ENCODE measurements at regions of chr22 and their contacts with region 1.

Region 1: DNA sequence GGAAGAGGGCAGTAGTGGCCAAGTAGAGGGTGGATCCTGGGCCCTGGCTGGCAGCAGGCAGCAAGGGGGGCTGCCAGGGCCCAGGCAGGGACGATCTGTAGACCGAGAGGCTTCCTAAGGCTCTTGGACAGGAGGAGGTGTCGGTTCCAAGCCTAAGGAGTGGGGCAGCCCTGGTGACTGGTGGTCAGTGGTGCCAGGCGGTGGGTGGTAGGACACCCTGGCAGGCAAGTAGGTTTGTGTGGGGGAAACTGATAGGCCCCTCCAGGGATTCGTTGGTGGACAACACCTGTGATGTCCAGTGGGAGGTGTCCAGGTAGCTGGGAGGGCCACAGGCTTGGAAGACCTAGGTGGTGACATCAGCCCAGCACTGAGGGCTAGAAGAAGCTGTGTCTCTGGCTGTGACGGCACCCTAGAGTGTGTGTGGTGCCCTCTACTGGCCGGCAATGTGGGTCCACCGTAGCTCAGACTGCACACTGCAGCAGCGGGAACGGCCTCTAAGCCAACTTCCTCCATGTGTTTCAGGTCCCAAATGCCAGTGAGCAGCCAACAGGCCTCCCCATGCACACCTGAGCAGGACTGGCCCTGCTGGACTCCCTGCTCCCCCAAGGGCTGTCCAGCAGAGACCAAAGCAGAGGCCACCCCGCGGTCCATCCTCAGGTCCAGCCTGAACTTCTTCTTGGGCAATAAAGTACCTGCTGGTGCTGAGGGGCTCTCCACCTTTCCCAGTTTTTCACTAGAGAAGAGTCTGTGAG is 9.4 kb upstream of the SAMM50 start:
- DNase-seq: peak; percentile 87
- ATAC-seq: peak; percentile 100
- H3K4me3 Mint-ChIP-seq: no peak overlapping the region
- H3K27ac Mint-ChIP-seq: no peak overlapping the region
- H3K4me1 Mint-ChIP-seq: no peaks in the 10 kb centered on the region
- H3K27me3 Mint-ChIP-seq: peaks cover 9% of the 10 kb centered on the region

Region 2: GRCh38 chr22:43884600-43885325 is 61.0 kb before region 1 on chr22:
- CTCF ChIA-PET with region 1: interaction called, 16 read pairs
- POLR2A ChIA-PET with region 1: no interaction called
- intact Hi-C with region 1: loop called in 1 of 2 experiments (anchors 1 kb)
- DNase-seq: peak; percentile 77
- ATAC-seq: peak; percentile 31
- H3K4me3 Mint-ChIP-seq: no peak overlapping the region
- H3K27ac Mint-ChIP-seq: no peak overlapping the region
- H3K4me1 Mint-ChIP-seq: no peaks in the 10 kb centered on the region
- H3K27me3 Mint-ChIP-seq: peaks cover 15% of the 10 kb centered on the region

Region 3: DNA sequence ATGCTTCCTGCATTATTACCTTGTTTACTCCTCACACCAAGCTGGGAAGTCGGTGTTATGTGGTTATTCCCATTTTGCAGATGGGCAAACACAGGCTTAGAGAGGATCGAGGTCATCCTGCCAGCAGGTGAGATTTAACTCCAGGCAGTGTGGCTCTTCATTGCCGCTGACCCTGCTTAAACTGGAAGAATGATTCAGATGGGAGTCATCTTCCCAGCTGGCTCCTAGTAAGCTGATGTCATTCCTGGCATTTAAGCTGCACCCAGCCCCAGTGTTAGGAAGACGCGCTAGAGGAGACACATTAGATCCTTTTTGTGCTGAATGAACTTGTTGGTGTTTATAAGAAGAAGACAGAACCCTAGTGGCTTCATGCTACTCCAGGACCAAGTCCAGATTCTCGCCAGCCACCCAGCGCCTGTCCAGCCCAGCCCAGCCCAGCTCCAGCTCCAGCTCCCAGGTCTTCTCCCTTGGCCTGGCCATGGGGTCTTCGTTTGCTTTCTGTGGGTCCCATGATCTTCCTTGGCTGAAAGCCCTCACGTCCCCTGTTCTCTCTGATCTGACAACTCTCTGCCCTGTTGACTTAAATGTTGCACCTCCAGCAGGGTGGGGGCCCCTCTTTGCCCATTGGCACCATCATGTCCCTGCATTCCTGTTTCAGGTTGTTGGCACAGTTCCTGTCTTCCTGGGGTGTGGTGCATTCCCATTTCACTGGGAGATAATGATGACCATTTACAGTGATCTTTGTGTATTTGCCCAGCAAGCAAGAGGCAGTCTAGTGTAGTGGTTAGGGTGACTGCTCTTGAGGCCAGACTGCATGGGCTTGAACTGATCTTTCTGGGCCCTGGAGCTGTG is 91.9 kb after region 1 on chr22:
- CTCF ChIA-PET with region 1: no interaction called
- POLR2A ChIA-PET with region 1: no interaction called
- intact Hi-C with region 1: no loop called
- DNase-seq: no peak
- ATAC-seq: no peak
- H3K4me3 Mint-ChIP-seq: no peak overlapping the region
- H3K27ac Mint-ChIP-seq: no peak overlapping the region
- H3K4me1 Mint-ChIP-seq: peaks cover 11% of the 10 kb centered on the region
- H3K27me3 Mint-ChIP-seq: peaks cover 2% of the 10 kb centered on the region